ENCODE measurements at regions of chr14 and their contacts with region 1.

Region 1: DNA sequence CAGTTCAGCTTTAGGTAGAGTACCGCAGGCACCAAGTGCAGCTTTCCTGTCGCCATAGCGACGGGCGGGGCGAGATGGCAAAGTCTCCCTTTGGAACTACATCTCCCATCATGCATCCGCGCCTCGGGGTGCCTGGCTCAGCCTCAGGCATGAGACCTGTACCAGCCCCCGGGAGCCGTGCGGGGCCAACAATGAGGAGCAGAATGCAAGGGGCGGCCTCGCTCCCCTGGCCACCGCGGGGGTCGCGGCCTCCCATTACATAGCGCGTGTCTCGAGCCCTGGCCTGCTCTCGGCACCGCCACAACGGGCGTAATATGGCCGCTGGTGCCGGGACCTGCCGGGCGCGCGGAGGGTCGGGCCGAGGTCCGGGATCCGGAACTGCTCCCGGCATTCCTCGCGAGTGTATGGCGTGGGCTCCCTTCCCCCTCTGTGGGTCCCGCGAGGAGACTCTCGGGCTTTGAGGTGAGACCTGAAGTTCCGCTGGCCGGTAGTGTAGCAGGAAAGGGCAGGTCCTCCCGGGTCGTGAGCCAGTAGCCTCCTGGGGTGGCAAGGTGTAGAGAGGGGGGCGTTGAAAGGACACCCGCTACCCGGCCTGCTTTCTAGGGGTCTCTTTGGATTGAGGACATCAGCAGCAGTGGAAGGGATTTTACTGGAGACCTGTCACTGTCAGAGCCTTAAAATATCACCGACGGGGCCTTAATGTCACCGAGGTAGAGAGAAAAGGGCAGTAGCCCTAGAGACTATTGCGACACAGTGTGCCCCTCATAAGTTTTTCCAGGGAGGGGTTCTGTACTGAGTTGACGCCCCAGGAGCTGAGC is at the start of gene THTPA:
- DNase-seq: peak; percentile 96 to 98
- ATAC-seq: peak; percentile 96
- H3K4me3 ChIP-seq: peak within 1 kb of the TSS; percentile 46 to 91
- H3K27ac ChIP-seq: peak within 1 kb of the TSS; percentile 70 to 76
- H3K4me1 ChIP-seq: no peaks in the 10 kb centered on the region
- H3K27me3 ChIP-seq: no peaks in the 10 kb centered on the region
- total RNA-seq, gene THTPA: 13.0 to 13.7 TPM

Region 2: DNA sequence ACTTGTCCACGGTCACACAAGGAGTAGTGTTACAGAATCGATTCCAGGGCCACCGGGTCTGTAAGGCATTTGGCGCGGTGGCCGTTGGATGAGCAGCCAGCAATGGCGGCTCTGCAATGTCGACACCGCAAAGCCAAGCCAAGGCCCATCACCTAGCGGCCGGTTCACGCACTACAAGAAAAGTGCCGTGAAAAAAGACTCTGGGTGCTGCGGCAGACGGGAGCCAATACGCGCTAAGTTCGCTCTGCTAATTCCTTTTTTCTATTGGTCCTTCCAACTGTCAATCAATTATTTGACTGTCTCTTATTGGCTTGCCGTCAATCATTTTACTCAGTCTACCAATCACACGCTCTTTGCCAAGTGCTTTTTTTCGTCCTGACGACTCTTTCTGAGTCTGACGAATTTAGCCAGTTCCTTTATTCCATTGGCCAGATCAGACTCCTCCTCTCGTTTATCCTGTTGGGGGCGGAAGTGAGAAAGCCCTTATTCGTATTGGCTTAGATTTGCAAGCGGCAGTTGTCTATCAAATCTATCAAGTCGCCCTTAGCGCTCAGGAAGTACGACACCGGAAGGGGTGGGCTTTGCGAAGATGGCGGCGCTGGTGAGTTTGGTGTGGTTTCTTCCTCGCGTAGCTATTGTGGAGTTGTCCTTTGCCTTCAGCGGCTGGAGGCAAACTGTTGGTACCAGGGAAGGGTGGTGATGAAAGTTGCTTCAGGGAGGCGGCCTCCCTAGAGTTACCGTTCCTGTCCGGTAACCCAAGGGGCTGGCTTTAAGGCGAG is 86.8 kb before region 1 on chr14 and contains the start of gene NGDN:
- intact Hi-C with region 1: loop called in 1 of 2 experiments (anchors 2 kb)
- DNase-seq: peak; percentile 95 to 97
- ATAC-seq: peak; percentile 98
- H3K4me3 ChIP-seq: peak within 1 kb of the TSS; percentile 56 to 85
- H3K27ac ChIP-seq: peak within 1 kb of the TSS in 1 of 2 donors; percentile 79
- H3K4me1 ChIP-seq: no peaks in the 10 kb centered on the region
- H3K27me3 ChIP-seq: no peaks in the 10 kb centered on the region
- total RNA-seq, gene NGDN: 30.8 to 34.5 TPM

Region 3: GRCh38 chr14:23478111-23478759 is 77.9 kb before region 1 on chr14:
- intact Hi-C with region 1: loop called in 1 of 2 experiments (anchors 2 kb)
- DNase-seq: peak in 1 of 2 donors; percentile 63
- ATAC-seq: peak; percentile 66
- H3K4me3 ChIP-seq: no peak overlapping the region
- H3K27ac ChIP-seq: no peak overlapping the region
- H3K4me1 ChIP-seq: no peaks in the 10 kb centered on the region
- H3K27me3 ChIP-seq: no peaks in the 10 kb centered on the region